Heart left ventricle (tissue), 16 donors: ENCODE measurements at regions of chr9 and their contacts with region 1.

Region 1: DNA sequence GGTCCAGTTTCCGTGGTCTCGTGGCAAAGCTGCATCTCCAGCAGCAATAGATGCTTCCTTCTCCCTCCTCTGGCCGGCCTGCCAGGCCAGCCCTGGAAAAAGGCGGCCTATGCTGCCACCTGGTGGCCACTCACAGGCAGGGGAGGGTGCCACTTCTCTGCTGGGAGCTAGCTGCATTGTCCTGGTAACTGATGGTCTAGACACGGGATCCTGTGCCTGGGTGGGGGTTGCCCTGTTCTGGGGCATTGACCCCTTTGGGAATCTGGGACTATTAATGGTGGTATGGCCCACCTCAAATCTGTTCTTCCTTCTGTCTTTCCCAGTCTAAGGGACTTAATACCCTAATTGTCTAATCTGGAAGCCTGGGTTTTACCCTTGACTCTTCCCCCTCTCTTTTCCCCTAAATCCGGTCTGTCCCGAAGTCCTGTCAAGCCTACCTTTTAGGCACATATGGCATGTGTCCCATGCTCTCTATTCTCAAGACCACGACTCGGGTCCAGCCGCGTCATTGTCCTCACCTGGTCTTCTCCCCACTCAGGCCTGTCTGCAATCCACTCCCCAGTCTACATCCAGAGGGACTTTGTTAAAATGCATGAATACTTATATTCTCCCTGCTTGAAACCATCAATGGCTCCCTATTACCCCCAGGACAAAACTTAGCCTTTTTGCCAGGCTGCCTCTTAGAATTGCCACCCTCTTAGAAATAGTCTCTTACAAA is 20.0 kb upstream of the PTGS1 start:
- DNase-seq: peak; percentile 76 to 92 (median 78)
- ATAC-seq: peak; percentile 81 to 89 (median 83)
- H3K4me3 ChIP-seq: no peak overlapping the region
- H3K27ac ChIP-seq: no peak overlapping the region
- H3K4me1 ChIP-seq: peaks cover 0 to 28% (median 17%) of the 10 kb centered on the region in 12 donors
- H3K27me3 ChIP-seq: peaks cover 0 to 5% (median 0%) of the 10 kb centered on the region in 9 donors
- CTCF ChIP-seq: peak; percentile 94 to 99 (median 96)
- POLR2A ChIP-seq: no peak

Region 2: DNA sequence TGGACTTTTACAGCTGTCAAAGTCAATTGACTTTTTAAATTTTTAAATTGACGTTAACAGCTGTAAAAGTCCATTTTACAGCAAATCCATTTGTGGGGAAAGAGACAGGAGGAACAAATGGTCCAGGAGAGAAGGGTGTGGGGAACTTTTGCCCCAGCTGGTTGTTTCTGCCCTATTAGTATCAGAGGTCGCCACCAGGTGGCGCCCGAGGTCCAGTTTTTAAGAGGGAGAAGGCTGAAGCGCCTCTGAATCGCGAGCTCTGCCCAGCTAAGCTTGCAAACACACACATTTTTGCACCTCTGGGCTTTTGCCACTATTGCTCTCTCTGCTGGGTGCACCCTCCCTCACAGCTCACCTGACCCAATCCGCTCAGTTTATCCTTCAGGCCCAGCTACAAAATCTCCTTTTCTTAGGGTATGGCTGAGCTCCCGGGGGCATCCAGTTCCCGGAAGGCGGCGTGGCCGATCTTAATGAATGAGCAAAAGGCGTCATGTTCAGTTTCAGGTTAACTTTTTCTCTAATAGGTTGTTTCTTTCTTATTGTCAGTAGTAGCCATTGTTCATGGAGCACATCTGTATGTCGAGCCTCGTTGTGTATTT is 251.4 kb before region 1 on chr9:
- intact Hi-C with region 1: loop called in 9 of 10 experiments (anchors 1 to 2 kb)
- DNase-seq: peak; percentile 75 to 89 (median 79)
- ATAC-seq: peak in 3 of 4 donors; percentile 78 to 89 (median 88)
- H3K4me3 ChIP-seq: peak overlapping the region in 1 of 12 donors; percentile 27
- H3K27ac ChIP-seq: no peak overlapping the region
- H3K4me1 ChIP-seq: peaks cover 0 to 8% (median 0%) of the 10 kb centered on the region in 12 donors
- H3K27me3 ChIP-seq: no peaks in the 10 kb centered on the region
- CTCF ChIP-seq: peak; percentile 79 to 94 (median 88)
- POLR2A ChIP-seq: no peak

Region 3: GRCh38 chr9:122228568-122229484 is 122.0 kb before region 1 on chr9 and contains the start of gene LHX6:
- intact Hi-C with region 1: loop called in 1 of 10 experiments (anchors 5 kb)
- DNase-seq: peak in 1 of 5 donors; percentile 49
- ATAC-seq: peak in 3 of 4 donors; percentile 24 to 70 (median 35)
- H3K4me3 ChIP-seq: peak within 1 kb of the TSS; percentile 29 to 61 (median 52)
- H3K27ac ChIP-seq: peak within 1 kb of the TSS in 8 of 12 donors; percentile 10 to 57 (median 39)
- H3K4me1 ChIP-seq: peaks cover 0 to 33% (median 18%) of the 10 kb centered on the region in 12 donors
- H3K27me3 ChIP-seq: peaks cover 28 to 87% (median 68%) of the 10 kb centered on the region in 9 donors
- CTCF ChIP-seq: no peak
- POLR2A ChIP-seq: no peak
- total RNA-seq, gene LHX6: 2.9 to 11.2 (median 6.5) TPM

Region 4: GRCh38 chr9:122297512-122297911 is 53.3 kb before region 1 on chr9:
- intact Hi-C with region 1: loop called in 1 of 10 experiments (anchors 10 kb)
- DNase-seq: no peak
- ATAC-seq: no peak
- H3K4me3 ChIP-seq: no peak overlapping the region
- H3K27ac ChIP-seq: no peak overlapping the region
- H3K4me1 ChIP-seq: no peaks in the 10 kb centered on the region
- H3K27me3 ChIP-seq: no peaks in the 10 kb centered on the region
- CTCF ChIP-seq: no peak
- POLR2A ChIP-seq: no peak

Region 5: DNA sequence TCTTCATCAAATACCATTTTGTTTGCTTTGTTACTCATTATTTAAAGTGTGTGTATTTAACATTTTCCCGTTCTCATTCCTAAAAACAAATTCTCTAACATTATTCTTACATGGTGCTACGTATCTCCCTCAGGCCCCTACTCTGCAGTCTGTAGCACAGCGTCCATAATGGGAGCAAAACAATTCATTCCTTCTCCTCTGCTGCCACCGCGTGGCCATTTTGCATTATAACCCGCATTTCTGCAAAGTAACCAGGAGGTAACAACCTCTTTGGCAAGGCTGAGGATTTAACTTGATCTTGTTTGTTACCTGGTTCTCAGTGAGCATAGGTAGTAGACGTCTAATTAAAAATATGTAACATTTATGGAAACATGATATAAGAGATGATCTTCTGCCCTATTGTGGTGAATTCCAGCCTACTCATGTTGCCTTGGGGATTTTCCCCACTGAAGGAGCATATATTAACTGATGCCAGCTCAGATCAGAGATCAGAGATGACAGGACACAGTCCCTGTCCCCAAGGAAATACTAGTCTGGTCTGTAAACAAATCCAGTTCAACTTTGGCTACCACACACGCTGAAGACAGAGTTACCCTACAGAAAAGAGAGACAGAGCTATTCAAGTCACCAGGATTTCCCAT is 459.6 kb after region 1 on chr9:
- intact Hi-C with region 1: loop called in 2 of 10 experiments (anchors 10 kb)
- DNase-seq: peak; percentile 59 to 76 (median 61)
- ATAC-seq: peak; percentile 81 to 93 (median 89)
- H3K4me3 ChIP-seq: no peak overlapping the region
- H3K27ac ChIP-seq: no peak overlapping the region
- H3K4me1 ChIP-seq: peaks cover 0 to 4% (median 0%) of the 10 kb centered on the region in 12 donors
- H3K27me3 ChIP-seq: no peaks in the 10 kb centered on the region
- CTCF ChIP-seq: peak; percentile 65 to 86 (median 76)
- POLR2A ChIP-seq: no peak